ENCODE measurements at regions of chr2 and their contacts with region 1.

Region 1: DNA sequence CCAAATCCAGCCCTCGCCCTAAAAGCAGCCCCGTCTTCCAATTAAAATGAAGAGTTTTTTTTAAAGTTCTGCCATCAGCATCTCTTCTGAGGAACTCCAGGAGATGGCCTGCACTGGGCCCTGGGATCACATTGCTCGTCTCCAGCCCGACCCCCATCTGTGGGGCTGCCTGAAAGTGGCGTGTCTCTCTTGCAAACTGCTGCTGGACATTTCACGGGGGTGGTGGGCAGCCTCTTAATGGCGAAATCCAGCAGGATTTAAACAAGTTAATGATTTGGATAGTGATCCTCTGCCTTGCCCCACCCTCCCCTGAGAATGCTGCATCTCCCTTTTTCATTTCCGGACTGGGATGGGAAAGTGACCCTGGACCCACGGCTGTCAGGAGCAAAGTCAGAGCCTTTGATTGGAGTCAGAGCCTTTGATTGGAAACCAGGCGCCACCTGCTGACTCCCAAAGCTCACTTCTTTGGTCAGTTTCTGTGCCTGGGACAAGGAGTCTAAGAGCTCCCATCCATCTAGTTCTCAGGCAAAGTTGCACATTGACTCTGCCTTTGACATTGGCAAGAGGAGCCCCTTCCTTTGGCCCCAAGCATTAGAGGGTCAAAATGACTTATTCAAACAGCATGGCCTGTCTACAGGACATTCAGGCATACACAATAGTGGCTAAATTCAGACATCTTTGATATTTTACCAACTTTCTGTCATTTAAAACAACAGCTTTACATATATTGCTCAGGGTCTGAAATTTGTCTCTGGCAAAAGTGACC is 155.2 kb downstream of the SH3BP4 start:
- DNase-seq: peak in 3 of 4 donors; percentile 48 to 71 (median 59)
- ATAC-seq: peak; percentile 80
- H3K4me3 ChIP-seq: no peak overlapping the region
- H3K27ac ChIP-seq: no peak overlapping the region
- H3K4me1 ChIP-seq: no peaks in the 10 kb centered on the region
- H3K27me3 ChIP-seq: no peaks in the 10 kb centered on the region
- CTCF ChIP-seq: peak; percentile 31 to 42

Region 2: GRCh38 chr2:234550511-234551107 is 556.4 kb before region 1 on chr2:
- intact Hi-C with region 1: loop called (anchors 5 to 10 kb)
- DNase-seq: peak; percentile 28 to 78 (median 68)
- ATAC-seq: peak; percentile 91
- H3K4me3 ChIP-seq: no peak overlapping the region
- H3K27ac ChIP-seq: no peak overlapping the region
- H3K4me1 ChIP-seq: no peaks in the 10 kb centered on the region
- H3K27me3 ChIP-seq: peaks cover 0 to 15% of the 10 kb centered on the region in 2 donors
- CTCF ChIP-seq: peak; percentile 85 to 86